ENCODE measurements at regions of chr12 and their contacts with region 1.

Region 1: DNA sequence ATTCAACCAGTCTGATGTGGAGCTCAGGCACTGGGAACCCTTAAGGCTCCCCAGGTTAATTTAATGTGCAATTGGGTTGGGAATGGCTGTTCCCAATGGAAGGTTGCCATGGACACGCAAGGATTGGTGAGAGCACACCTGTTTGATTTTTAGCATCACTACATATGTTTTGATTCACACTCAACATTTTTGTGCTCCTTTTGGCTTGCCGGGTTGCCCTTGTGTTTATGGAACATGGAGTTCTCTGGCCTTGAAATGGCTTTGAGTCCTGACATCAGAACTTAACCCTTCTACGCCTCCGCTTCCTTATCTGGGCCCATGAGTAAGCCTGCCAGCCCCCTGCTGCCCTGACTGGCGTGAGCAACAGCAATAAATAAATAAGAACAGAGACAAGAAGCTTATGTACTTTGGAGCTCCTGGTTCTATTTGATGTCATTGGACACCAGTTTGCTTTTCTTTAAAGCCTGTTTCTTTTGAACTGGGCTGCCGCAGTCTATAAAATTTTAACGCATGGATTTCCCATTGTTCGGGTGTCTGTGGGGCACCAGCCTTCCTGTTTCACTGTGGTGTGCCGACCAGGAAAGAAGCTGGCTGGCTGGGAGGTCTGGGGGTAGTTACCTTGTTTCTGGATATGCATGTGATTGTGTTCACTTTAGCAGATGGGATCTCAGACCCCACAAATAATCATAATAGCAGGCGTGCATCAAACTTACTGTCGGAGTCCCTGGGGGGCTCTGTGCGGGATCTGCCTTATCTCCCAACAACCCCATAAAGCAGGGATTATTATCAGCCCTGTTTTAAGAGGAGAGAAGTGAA is 27.8 kb downstream of the TBX3 start:
- DNase-seq: no peak
- H3K4me3 ChIP-seq: no peak overlapping the region
- H3K27ac ChIP-seq: no peak overlapping the region
- H3K4me1 ChIP-seq: peaks cover 5 to 19% (median 12%) of the 10 kb centered on the region in 4 experiments
- H3K27me3 ChIP-seq: peaks cover 0 to 3% (median 2%) of the 10 kb centered on the region in 4 experiments; a peak in 2 of 7 replicates
- CTCF ChIP-seq: no peak
- EP300 ChIP-seq: no peak
- POLR2A ChIP-seq: no peak
- RAD21 ChIP-seq: no peak

Region 2: GRCh38 chr12:114355389-114356088 is 300.6 kb before region 1 on chr12:
- CTCF ChIA-PET with region 1: no interaction called
- POLR2A ChIA-PET with region 1: no interaction called
- DNase-seq: peak in 1 of 2 experiments; percentile 87
- H3K4me3 ChIP-seq: no peak overlapping the region
- H3K27ac ChIP-seq: no peak overlapping the region
- H3K4me1 ChIP-seq: peaks cover 0 to 2% (median 0%) of the 10 kb centered on the region in 4 experiments; a peak in 2 of 7 replicates
- H3K27me3 ChIP-seq: no peaks in the 10 kb centered on the region; a peak in 1 of 7 replicates
- CTCF ChIP-seq: peak; percentile 82 to 97 (median 94)
- EP300 ChIP-seq: no peak
- POLR2A ChIP-seq: no peak
- RAD21 ChIP-seq: peak; percentile 82 to 87

Region 3: DNA sequence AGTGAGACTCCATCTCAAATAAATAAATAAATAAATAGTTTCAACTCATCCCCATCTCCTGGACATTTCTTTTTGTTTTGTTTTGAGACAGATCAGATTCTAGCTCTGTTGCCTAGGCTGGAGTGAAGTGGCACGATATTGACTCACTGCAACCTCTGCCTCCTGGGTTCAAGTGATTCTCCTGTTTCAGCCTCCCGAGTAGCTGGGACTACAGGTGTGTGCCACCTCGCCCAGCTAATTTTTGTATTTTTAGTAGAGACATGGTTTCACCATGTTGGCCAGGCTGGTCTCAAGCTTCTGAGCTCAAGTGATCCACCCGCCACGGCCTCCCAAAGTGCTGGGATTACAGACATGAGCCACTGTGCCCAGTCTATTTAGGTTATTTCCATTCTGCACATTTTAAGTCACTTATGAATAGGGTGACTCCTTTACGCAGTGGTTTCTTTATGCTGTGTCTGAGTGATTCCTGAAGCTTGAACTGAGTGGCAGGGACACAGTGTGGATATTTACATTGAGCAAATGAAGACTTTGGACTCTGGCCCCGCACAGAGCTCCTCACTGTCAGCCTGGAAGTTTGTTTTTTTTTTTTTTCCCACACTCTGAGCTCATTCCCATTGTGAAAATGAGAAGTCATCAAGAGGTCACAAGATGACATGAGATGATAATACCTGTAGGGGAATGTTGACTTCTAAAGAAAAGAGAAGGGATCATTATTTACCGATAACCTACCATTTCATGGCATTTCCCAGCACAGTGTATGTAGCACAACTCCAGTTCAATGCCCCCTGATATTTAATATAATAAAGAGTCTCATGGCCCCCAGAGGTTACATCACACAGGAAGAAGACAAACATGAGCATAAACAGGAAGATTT is 44.8 kb before region 1 on chr12:
- CTCF ChIA-PET with region 1: no interaction called
- POLR2A ChIA-PET with region 1: no interaction called
- DNase-seq: no peak
- H3K4me3 ChIP-seq: no peak overlapping the region
- H3K27ac ChIP-seq: no peak overlapping the region
- H3K4me1 ChIP-seq: no peaks in the 10 kb centered on the region
- H3K27me3 ChIP-seq: no peaks in the 10 kb centered on the region
- CTCF ChIP-seq: no peak
- EP300 ChIP-seq: no peak
- POLR2A ChIP-seq: no peak
- RAD21 ChIP-seq: no peak

Region 4: GRCh38 chr12:114636723-114637483 is 19.2 kb before region 1 on chr12:
- CTCF ChIA-PET with region 1: interaction called, 15 read pairs
- POLR2A ChIA-PET with region 1: no interaction called
- DNase-seq: no peak
- H3K4me3 ChIP-seq: no peak overlapping the region
- H3K27ac ChIP-seq: no peak overlapping the region
- H3K4me1 ChIP-seq: peaks cover 2 to 16% (median 6%) of the 10 kb centered on the region in 4 experiments; a peak in 5 of 7 replicates
- H3K27me3 ChIP-seq: peaks cover 0 to 3% (median under 1%) of the 10 kb centered on the region in 4 experiments; a peak in 2 of 7 replicates
- CTCF ChIP-seq: peak; percentile 29 to 47 (median 36); a peak in 3 of 4 replicates
- EP300 ChIP-seq: no peak
- POLR2A ChIP-seq: no peak
- RAD21 ChIP-seq: peak; percentile 28 to 44; a peak in 3 of 4 replicates

Region 5: GRCh38 chr12:114767906-114768722 is 112.0 kb after region 1 on chr12:
- CTCF ChIA-PET with region 1: no interaction called
- POLR2A ChIA-PET with region 1: no interaction called
- DNase-seq: no peak
- H3K4me3 ChIP-seq: no peak overlapping the region
- H3K27ac ChIP-seq: no peak overlapping the region
- H3K4me1 ChIP-seq: no peaks in the 10 kb centered on the region
- H3K27me3 ChIP-seq: no peaks in the 10 kb centered on the region
- CTCF ChIP-seq: no peak
- EP300 ChIP-seq: no peak
- POLR2A ChIP-seq: no peak
- RAD21 ChIP-seq: no peak

Region 6: DNA sequence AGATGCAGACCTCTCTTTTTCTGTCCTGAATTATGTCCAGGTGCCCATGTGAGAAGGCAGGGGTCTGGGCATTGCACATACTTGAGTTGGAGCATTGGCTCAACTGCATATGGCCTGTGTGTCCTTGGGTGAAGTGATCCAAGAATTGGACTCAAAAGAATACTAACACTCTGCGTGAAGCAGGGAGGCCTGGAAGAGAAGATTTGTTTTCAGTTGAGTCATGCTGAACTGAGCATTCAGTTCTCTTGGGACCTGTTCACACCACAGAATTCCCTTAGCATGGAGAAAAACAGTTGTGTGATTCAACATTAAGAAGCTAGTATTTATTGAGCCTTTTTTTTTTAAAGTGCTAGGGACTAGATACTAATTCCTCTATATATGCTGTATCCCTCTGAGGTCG is 192.5 kb after region 1 on chr12:
- CTCF ChIA-PET with region 1: no interaction called
- POLR2A ChIA-PET with region 1: no interaction called
- DNase-seq: no peak
- H3K4me3 ChIP-seq: no peak overlapping the region
- H3K27ac ChIP-seq: no peak overlapping the region
- H3K4me1 ChIP-seq: no peaks in the 10 kb centered on the region
- H3K27me3 ChIP-seq: peaks cover 0 to 1% (median 0%) of the 10 kb centered on the region in 4 experiments; a peak in 1 of 7 replicates
- CTCF ChIP-seq: no peak
- EP300 ChIP-seq: no peak
- POLR2A ChIP-seq: no peak
- RAD21 ChIP-seq: no peak